ENCODE measurements at regions of chr18 and their contacts with region 1.

Region 1: DNA sequence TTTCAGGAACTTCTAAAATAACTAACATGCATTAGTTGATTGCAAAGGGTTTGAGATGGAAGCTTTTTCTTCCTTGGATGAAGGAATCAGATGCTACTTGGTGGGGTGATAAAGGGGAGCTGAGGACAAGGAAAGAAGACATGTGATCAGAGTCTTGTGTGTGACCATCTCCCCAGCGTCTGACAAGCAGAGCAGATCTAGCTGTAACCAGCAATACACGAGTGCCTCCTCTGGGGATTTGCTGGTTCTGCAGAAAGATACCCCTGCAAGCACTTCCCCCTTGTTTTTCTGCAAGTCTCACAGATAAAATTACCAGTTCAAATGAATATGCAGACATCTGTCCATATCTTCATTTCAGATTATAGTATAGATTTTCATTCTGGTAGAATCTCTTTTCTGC is 2.7 kb downstream of the CDH7 start:
- DNase-seq: peak; percentile 87
- H3K4me3 ChIP-seq: no peak overlapping the region
- H3K27ac ChIP-seq: peak overlapping the region; percentile 60
- H3K4me1 ChIP-seq: peaks cover 21% of the 10 kb centered on the region
- H3K27me3 ChIP-seq: peaks cover 8% of the 10 kb centered on the region
- CTCF ChIP-seq: peak; percentile 78

Region 2: GRCh38 chr18:64100116-64100922 is 1653.2 kb before region 1 on chr18:
- CTCF ChIA-PET with region 1: no interaction called
- POLR2A ChIA-PET with region 1: no interaction called
- intact Hi-C with region 1: loop called (anchors 10 kb)
- DNase-seq: peak; percentile 36
- H3K4me3 ChIP-seq: no peak overlapping the region
- H3K27ac ChIP-seq: no peak overlapping the region
- H3K4me1 ChIP-seq: peaks cover 6% of the 10 kb centered on the region
- H3K27me3 ChIP-seq: no peaks in the 10 kb centered on the region
- CTCF ChIP-seq: no peak

Region 3: DNA sequence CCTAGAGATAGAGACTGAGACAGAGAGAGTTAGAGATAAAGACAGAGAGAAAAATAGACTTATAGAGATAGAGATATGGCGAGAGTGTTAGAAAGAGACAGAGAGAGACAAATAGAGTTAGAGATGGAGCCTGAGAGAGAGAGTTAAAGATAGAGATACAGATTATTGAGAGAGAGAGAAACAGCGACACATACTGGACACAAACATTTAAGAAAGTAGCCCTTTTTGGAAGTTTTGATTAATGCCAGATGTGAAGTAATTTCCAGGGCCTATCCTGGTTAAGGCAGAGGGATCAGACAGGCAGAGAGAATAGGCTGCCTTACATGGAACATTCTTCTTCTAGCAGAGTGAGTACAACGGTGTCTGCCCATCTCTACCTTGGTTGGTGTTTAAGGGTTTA is 314.3 kb before region 1 on chr18:
- CTCF ChIA-PET with region 1: no interaction called
- POLR2A ChIA-PET with region 1: no interaction called
- intact Hi-C with region 1: loop called (anchors 5 kb)
- DNase-seq: peak; percentile 80
- H3K4me3 ChIP-seq: no peak overlapping the region
- H3K27ac ChIP-seq: no peak overlapping the region
- H3K4me1 ChIP-seq: no peaks in the 10 kb centered on the region
- H3K27me3 ChIP-seq: no peaks in the 10 kb centered on the region
- CTCF ChIP-seq: peak; percentile 64

Measured in A673 (cell line).